Activated CD8-positive, alpha-beta memory T cell treated with anti-CD3 and anti-CD28 coated beads, Interleukin-2, amount 10 ng/mL, durations not matched to agents 7 days and 5 days (primary cell): ENCODE measurements at regions of chr1 and their contacts with region 1.

Region 1: GRCh38 chr1:235971571-235972310 is 93.1 kb downstream of the NID1 start:
- DNase-seq: peak; percentile 95
- ATAC-seq: peak; percentile 98
- H3K4me3 Mint-ChIP-seq: peak overlapping the region; percentile 68
- H3K27ac Mint-ChIP-seq: peak overlapping the region; percentile 93
- H3K4me1 Mint-ChIP-seq: peaks cover 18% of the 10 kb centered on the region
- H3K27me3 Mint-ChIP-seq: peaks cover 10% of the 10 kb centered on the region

Region 2: DNA sequence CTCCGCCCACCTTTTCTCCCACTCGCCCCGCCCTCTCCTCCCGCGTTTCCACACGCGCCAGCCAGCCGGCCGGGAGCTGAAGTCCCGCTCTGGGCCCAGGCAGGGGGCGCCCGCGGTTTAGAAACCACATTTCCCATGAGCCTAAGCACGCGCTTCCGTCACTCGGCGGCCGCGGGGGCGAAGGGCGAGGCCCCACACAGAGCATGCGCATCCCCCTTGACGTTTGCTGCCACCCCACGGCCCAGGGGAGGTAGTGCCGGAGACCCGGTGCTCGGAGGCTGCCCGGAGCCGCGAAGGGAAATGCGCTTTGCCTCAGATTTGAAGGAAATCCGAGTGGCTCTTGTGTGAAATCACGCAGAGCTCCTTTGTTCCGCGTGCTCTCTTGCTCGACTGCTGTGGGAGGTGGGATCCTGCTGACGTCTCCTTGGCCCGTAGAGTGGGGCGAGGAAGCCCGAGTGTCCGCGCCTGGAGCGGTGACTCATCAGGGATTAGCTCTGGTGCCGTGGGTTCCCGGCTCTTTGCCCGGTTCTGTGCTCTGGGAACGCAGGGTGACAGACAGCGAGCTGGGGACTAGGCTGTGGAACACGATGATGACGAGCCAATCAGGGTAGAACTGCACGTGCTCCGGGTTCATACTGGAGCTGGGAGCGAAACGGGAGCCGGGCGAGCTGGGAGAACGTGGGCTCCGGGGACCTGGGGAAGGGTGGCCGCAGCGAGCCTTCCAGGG is 467.1 kb before region 1 on chr1:
- CTCF ChIA-PET with region 1: interaction called, 23 read pairs
- DNase-seq: peak; percentile 98
- ATAC-seq: peak; percentile 89
- H3K4me3 Mint-ChIP-seq: peak overlapping the region; percentile 91
- H3K27ac Mint-ChIP-seq: peak overlapping the region; percentile 98
- H3K4me1 Mint-ChIP-seq: peaks cover 21% of the 10 kb centered on the region
- H3K27me3 Mint-ChIP-seq: peaks cover 5% of the 10 kb centered on the region

Region 3: DNA sequence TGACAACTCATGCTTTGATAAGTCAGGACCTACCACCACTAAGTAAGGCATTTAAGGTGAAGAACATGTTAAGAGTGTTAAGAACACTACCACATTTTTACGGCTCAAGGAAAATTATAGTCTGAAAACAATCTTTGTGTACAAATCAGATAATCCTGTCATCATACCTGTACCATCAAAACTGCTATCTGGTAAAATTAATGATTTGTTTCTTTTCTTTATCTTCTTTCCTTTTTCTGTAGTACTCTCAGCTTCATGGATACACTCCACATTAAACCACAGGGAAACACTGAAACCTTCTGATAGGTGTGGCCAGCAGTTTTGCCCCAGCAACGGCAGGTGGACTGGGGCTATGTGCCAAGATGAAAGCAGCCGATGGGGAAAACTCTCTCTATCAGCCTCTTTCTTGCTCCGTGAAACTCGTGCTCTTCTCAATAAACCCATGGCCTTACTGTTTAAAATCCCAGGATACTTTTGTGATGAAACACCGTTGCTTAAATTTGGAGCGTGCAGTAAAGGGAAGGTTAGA is 180.1 kb before region 1 on chr1:
- CTCF ChIA-PET with region 1: interaction called, 14 read pairs
- DNase-seq: no peak
- ATAC-seq: no peak
- H3K4me3 Mint-ChIP-seq: no peak overlapping the region
- H3K27ac Mint-ChIP-seq: no peak overlapping the region
- H3K4me1 Mint-ChIP-seq: no peaks in the 10 kb centered on the region
- H3K27me3 Mint-ChIP-seq: no peaks in the 10 kb centered on the region

Region 4: GRCh38 chr1:235866913-235867845 is 104.6 kb before region 1 on chr1:
- CTCF ChIA-PET with region 1: interaction called, 72 read pairs
- DNase-seq: peak; percentile 98
- ATAC-seq: peak; percentile 76
- H3K4me3 Mint-ChIP-seq: peak overlapping the region; percentile 89
- H3K27ac Mint-ChIP-seq: peak overlapping the region; percentile 98
- H3K4me1 Mint-ChIP-seq: peaks cover 51% of the 10 kb centered on the region
- H3K27me3 Mint-ChIP-seq: no peaks in the 10 kb centered on the region

Region 5: DNA sequence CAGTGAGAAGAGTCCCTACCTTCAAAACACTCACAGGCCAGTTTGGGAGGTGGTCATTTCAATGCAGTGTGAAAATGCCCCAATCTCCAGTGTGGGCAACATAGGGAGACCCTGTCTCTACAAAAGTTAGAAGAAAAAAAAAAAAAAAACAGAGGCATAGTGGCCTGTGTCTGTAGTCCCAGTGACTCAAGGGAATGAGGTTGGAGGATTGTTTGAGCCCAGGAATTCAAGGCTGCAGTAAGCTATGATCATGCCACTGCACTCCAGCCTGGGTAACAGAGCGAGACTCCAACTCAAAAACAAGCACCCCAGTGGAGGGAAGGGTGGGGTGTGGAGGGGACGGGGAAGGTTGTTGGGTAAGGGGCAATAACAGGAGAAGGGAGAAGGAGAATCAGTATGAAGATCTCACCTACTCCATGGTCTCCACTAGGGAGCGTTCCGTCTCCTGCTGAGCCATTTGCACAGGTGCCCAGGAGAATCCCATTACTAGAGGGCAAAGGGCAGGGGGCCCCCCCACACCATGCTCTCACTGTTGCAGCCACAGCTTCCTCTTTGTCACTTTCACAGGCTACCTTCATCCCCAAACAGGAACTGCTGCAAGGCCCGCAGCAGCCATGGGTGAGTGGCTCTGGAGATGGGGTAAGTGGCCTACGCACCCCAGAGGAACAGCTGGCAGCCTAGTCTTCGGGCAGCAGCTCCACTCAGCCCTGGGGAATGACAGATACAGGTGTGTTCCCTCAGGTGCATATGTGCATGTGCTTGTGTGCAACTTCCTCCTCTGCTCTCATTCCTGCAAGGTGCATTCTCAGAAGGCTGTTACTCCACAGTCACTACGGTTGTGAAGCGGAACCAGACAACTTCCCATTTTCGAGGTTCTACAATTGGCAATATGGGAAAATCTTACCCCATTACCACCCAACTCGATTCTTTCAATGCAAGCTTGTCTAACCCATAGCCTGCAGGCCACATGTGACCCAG is 17.1 kb before region 1 on chr1:
- CTCF ChIA-PET with region 1: interaction called, 68 read pairs
- DNase-seq: peak; percentile 78
- ATAC-seq: peak; percentile 85
- H3K4me3 Mint-ChIP-seq: no peak overlapping the region
- H3K27ac Mint-ChIP-seq: no peak overlapping the region
- H3K4me1 Mint-ChIP-seq: peaks cover 38% of the 10 kb centered on the region
- H3K27me3 Mint-ChIP-seq: peaks cover 19% of the 10 kb centered on the region

Region 6: DNA sequence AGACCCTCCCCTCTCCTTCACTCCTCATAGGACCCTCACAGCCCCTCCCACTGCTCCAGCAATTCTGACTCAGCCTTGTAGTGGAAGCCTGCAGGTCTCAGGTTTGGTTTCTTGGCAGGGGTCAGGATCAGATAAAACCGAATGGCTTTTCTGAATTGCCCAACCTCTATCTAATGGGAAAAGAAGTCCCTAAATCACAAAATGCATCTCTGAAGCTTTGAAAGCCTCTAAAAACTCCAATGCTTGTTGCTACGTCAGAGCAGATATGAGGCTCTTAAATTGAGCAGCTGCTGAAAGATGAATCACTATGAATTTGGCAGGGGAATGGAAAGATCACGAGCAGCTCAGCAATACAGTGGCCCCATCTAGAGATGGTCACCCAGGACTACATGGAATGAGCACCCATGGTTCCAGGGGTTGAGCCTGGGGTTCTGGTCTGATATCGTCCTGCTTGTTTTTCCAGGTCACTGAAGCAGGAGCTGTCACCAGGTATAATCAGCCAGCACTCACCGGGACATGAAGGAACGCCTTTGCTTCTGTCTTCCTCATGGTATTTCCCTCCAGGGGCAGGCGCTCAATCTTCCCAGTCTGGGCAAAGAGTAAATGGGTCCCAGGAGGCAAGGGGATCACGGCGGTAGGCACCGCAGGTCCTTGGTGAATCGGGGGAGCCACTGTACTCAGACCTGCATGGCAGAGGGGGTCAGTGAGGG is 18.8 kb after region 1 on chr1:
- CTCF ChIA-PET with region 1: interaction called, 12 read pairs
- DNase-seq: no peak
- ATAC-seq: no peak
- H3K4me3 Mint-ChIP-seq: no peak overlapping the region
- H3K27ac Mint-ChIP-seq: no peak overlapping the region
- H3K4me1 Mint-ChIP-seq: peaks cover 9% of the 10 kb centered on the region
- H3K27me3 Mint-ChIP-seq: peaks cover 6% of the 10 kb centered on the region